ENCODE measurements at regions of chr9 and their contacts with region 1.

Region 1: DNA sequence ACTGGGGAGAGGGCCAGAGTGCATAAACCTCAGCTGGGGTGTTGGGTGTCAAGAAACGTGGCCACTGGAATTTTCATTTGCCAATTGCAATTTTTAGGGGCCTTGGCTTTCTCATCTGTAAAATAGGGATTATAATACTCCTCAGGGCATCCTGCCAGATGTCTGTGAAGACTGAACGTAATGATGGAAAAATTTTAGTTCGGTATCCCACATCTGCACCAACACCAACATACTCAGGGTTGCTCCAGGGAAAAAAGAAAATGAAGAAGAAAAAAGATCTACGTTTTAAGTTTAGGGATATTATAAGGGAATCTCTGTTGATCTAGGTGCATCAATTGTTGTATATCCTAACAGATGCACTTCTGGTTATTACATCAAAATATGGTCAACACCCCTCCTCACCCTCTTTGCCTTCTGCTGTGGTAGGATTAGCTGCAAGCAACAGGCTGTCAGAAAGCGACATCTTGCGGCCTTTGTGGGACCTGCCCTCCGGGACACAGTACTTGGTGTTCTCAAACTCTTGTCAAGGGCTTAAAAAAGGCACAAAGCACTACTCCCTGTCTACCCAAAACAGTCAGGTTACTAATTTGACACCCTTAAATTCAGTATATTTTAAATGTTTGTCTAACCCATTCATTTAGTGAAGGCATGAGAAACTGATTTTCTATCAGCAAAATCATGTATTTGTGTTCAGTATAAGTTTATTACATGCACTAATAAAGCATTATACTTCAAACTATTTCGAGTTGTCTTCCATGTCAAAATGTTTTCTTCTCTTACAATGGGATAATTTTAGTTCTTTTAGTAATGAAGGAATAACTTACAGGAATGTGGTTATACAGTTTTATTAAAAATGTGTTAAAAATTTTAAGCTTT is 8.3 kb upstream of the TBC1D2 start:
- DNase-seq: peak in 3 of 4 donors; percentile 79 to 91 (median 84)
- ATAC-seq: peak; percentile 100
- H3K4me3 ChIP-seq: no peak overlapping the region
- H3K27ac ChIP-seq: no peak overlapping the region
- H3K4me1 ChIP-seq: no peaks in the 10 kb centered on the region
- H3K27me3 ChIP-seq: no peaks in the 10 kb centered on the region
- CTCF ChIP-seq: peak; percentile 87 to 93

Region 2: GRCh38 chr9:98074115-98074990 is 189.4 kb before region 1 on chr9:
- intact Hi-C with region 1: loop called in 1 of 2 experiments (anchors 10 kb)
- DNase-seq: peak in 2 of 4 donors; percentile 62 to 63
- ATAC-seq: peak; percentile 73
- H3K4me3 ChIP-seq: no peak overlapping the region
- H3K27ac ChIP-seq: peak overlapping the region; percentile 48 to 50
- H3K4me1 ChIP-seq: peaks cover 9 to 46% of the 10 kb centered on the region in 2 donors
- H3K27me3 ChIP-seq: no peaks in the 10 kb centered on the region
- CTCF ChIP-seq: peak; percentile 91 to 92

Region 3: GRCh38 chr9:98207606-98208005 is 56.1 kb before region 1 on chr9:
- intact Hi-C with region 1: loop called in 1 of 2 experiments (anchors 5 kb)
- DNase-seq: no peak
- ATAC-seq: no peak
- H3K4me3 ChIP-seq: no peak overlapping the region
- H3K27ac ChIP-seq: no peak overlapping the region
- H3K4me1 ChIP-seq: peaks cover 0 to 9% of the 10 kb centered on the region in 2 donors
- H3K27me3 ChIP-seq: no peaks in the 10 kb centered on the region
- CTCF ChIP-seq: no peak